ENCODE measurements at regions of chr3 and their contacts with region 1.

Region 1: DNA sequence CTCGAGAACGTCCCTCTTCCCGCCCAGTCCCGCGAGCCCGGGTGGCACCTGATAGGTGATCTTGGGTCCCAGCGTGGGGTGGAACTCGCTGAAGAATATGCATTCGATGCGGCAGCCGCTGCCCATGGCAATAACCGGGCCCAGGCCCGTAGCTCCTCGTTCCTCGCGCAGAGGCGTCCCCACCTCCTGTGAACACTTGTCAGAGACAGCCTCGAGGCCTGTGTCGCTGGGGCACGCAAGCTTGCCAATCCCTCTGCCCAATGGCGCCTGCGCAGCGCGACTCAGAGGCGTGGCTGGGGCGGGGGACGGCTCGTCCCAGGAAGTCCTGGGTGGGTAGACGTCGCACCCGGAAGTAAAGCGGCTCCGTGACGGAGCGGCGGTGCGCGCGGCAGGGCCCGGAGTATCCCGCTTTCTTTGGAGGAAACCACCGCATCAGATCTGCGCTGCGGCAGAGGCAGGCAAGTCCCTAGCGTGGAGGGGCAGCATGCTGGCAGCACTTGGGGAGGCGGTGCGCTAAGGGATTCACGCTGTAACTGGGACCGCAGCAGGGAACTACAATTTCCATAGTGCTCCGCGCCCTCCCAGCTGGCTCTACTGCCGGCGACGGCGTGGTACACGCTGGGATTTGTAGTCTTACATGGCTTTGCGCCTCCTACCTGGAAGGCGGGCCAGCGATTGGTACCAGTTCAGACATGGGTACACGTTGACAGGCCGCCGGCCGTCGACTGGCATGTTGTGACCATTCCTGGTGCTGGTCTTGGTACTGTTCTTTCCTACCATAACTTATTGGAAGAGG is at the starts of genes CYB561D2 and NPRL2:
- DNase-seq: peak; percentile 98 to 100 (median 99)
- ATAC-seq: peak; percentile 88
- H3K4me3 ChIP-seq: peak within 1 kb of the TSS; percentile 79
- H3K4me3 Mint-ChIP-seq: peak within 1 kb of the TSS; percentile 98
- H3K27ac ChIP-seq: peak within 1 kb of the TSS; percentile 83 to 94
- H3K27ac Mint-ChIP-seq: peak within 1 kb of the TSS; percentile 99
- H3K4me1 ChIP-seq: peaks cover 54% of the 10 kb centered on the region
- H3K4me1 Mint-ChIP-seq: peaks cover 65% of the 10 kb centered on the region
- H3K27me3 ChIP-seq: no peaks in the 10 kb centered on the region
- H3K27me3 Mint-ChIP-seq: no peaks in the 10 kb centered on the region
- CTCF ChIP-seq: no peak
- total RNA-seq, gene CYB561D2: 24.2 to 24.3 TPM
- total RNA-seq, gene NPRL2: 28.7 to 30.9 TPM

Region 2: DNA sequence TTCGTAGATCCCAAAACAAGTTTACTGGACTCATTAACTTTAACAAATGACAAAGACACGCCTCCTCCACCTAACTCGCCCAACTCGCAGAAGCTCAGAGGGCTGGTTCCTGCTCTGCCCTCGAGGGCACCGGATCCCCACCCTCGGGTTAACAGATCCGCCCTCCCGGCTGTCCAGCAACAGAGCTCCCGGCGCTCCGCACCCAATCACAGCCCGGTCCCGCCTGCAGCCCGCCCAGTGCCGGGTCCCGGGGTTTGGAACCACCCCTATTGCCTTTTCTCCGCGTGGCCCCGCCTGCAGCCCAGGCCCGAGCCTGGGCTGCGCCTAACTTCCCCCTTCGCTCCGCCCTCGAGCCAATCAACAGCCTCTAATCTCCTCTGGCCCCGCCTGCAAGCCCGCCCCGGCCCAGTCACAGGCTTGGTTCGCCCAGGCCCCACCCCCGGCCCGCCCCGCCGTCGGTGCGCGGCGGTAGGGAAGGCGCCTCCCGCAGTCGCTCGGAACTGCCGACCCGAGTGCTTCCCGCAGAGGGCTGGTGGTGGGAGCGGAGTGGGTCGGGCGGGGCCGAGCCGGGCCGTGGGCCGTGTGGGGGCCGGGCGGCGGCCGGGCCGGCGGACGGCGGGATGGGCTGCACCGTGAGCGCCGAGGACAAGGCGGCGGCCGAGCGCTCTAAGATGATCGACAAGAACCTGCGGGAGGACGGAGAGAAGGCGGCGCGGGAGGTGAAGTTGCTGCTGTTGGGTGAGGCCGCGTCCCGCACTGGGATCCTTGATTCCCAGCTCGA is 114.8 kb before region 1 on chr3 and contains the start of gene GNAI2:
- CTCF ChIA-PET with region 1: no interaction called
- POLR2A ChIA-PET with region 1: interaction called, 4 read pairs
- intact Hi-C with region 1: loop called in 1 of 2 experiments (anchors 5 kb)
- DNase-seq: peak; percentile 98 to 99 (median 98)
- ATAC-seq: peak; percentile 85
- H3K4me3 ChIP-seq: peak within 1 kb of the TSS; percentile 94 to 100
- H3K4me3 Mint-ChIP-seq: peak within 1 kb of the TSS; percentile 96
- H3K27ac ChIP-seq: peak within 1 kb of the TSS; percentile 72 to 83
- H3K27ac Mint-ChIP-seq: peak within 1 kb of the TSS; percentile 96
- H3K4me1 ChIP-seq: peaks cover 38% of the 10 kb centered on the region
- H3K4me1 Mint-ChIP-seq: peaks cover 33% of the 10 kb centered on the region
- H3K27me3 ChIP-seq: no peaks in the 10 kb centered on the region
- H3K27me3 Mint-ChIP-seq: no peaks in the 10 kb centered on the region
- CTCF ChIP-seq: no peak
- total RNA-seq, gene GNAI2: 185 to 192 TPM

Region 3: GRCh38 chr3:50298836-50299637 is 51.7 kb before region 1 on chr3 and contains the starts of genes HYAL3 and NAA80:
- CTCF ChIA-PET with region 1: interaction called, 6 read pairs
- POLR2A ChIA-PET with region 1: interaction called, 18 read pairs
- intact Hi-C with region 1: loop called in 1 of 2 experiments (anchors 1 kb)
- DNase-seq: peak; percentile 85 to 100 (median 99)
- ATAC-seq: peak; percentile 89
- H3K4me3 ChIP-seq: peak within 1 kb of the TSS; percentile 97
- H3K4me3 Mint-ChIP-seq: peak within 1 kb of the TSS; percentile 99
- H3K27ac ChIP-seq: peak within 1 kb of the TSS; percentile 93 to 94
- H3K27ac Mint-ChIP-seq: peak within 1 kb of the TSS; percentile 99
- H3K4me1 ChIP-seq: peaks cover 25% of the 10 kb centered on the region
- H3K4me1 Mint-ChIP-seq: peaks cover 28% of the 10 kb centered on the region
- H3K27me3 ChIP-seq: no peaks in the 10 kb centered on the region
- H3K27me3 Mint-ChIP-seq: no peaks in the 10 kb centered on the region
- CTCF ChIP-seq: peak; percentile 53
- total RNA-seq, gene HYAL3: 2.1 to 3.2 TPM
- total RNA-seq, gene NAA80: 37.1 to 40.7 TPM

Region 4: DNA sequence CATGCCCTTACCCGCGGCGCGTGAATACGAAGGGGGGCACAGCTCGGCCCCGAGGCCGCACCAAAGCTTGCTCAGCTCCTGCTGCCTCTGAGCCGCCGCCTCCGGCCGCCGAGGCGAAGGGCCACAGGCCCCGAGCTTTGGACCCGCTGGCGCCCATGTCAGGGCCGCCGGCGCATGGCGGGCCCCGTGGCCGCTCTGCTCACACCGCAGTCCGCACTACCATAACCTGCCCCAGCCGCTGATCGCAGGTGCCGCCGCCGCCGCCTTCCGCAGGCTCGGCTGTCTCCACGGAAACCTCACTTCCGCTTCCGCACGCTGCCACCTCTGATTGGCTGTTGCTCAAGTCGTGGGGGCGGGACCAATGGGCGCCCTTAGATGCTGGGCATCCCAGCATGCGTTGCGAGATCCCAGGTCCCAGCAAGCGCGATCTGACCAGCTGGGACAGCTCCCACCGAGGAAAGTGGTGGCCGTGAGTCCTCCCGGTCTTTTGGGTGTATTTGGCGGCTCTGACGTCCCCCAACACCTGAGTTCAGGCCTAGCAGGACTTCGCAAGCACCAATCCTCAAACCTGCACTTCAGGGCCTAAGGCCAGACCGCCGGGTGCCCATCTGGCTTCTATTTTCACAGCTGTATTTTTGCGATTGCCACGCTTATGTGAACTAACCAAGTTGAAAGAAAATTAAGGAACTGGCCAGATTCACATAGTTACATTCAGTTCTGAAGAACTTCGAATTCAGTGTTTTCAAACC is 22.6 kb before region 1 on chr3 and contains the start of gene TUSC2:
- CTCF ChIA-PET with region 1: interaction called, 31 read pairs
- POLR2A ChIA-PET with region 1: interaction called, 129 read pairs
- intact Hi-C with region 1: loop called in 1 of 2 experiments (anchors 2 kb)
- DNase-seq: peak; percentile 85 to 98 (median 94)
- ATAC-seq: peak; percentile 96
- H3K4me3 ChIP-seq: peak within 1 kb of the TSS; percentile 78 to 89
- H3K4me3 Mint-ChIP-seq: peak within 1 kb of the TSS; percentile 94
- H3K27ac ChIP-seq: peak within 1 kb of the TSS; percentile 80 to 82
- H3K27ac Mint-ChIP-seq: peak within 1 kb of the TSS; percentile 93
- H3K4me1 ChIP-seq: peaks cover 26% of the 10 kb centered on the region
- H3K4me1 Mint-ChIP-seq: peaks cover 27% of the 10 kb centered on the region
- H3K27me3 ChIP-seq: no peaks in the 10 kb centered on the region
- H3K27me3 Mint-ChIP-seq: no peaks in the 10 kb centered on the region
- CTCF ChIP-seq: no peak
- total RNA-seq, gene TUSC2: 23.6 to 23.7 TPM

Region 5: DNA sequence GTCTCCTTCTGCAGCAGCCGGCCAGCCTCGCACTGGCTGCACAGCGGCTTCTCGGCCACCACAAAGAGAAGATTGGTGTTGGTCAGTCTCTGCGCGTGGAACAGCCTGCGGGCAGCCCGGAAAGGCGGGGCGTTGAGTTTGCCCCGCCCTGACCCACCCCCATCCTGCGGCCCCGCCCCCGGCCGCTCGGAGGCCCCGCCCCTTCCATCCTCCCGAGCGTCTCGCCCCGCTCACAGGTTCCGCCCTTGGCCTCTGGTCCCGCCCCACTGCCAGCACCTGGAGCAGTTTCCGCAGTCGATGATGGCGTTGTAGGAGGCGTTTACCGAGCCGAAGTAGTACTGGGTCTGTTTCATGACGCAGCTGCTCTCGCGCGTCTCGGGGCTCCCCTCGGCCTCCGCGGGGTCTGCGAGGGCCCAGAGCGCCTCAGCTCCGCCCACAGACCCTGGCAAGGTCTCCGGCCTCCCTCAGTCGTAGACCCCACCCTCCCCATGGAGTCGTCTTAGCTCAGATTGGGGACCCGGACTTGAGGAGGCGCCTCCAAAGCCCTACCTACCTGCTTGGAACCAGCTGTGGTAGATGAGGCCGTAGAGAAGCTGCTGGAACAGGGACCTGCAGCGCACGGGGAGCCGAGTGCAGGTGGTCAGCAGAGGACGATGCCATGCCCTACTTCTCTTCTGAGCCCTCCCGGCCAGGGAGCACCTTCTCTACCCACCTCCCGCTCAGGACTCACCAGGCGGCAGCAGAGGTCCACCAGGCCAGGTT is 14.5 kb after region 1 on chr3:
- CTCF ChIA-PET with region 1: interaction called, 7 read pairs
- POLR2A ChIA-PET with region 1: interaction called, 16 read pairs
- intact Hi-C with region 1: loop called (anchors 1 kb)
- DNase-seq: peak; percentile 89 to 98 (median 94)
- ATAC-seq: peak; percentile 95
- H3K4me3 ChIP-seq: peak overlapping the region; percentile 68 to 81
- H3K4me3 Mint-ChIP-seq: peak overlapping the region; percentile 87
- H3K27ac ChIP-seq: peak overlapping the region; percentile 91 to 92
- H3K27ac Mint-ChIP-seq: peak overlapping the region; percentile 95
- H3K4me1 ChIP-seq: peaks cover 20% of the 10 kb centered on the region
- H3K4me1 Mint-ChIP-seq: peaks cover 35% of the 10 kb centered on the region
- H3K27me3 ChIP-seq: no peaks in the 10 kb centered on the region
- H3K27me3 Mint-ChIP-seq: no peaks in the 10 kb centered on the region
- CTCF ChIP-seq: no peak

Region 6: GRCh38 chr3:50396488-50396887 is 45.8 kb after region 1 on chr3:
- CTCF ChIA-PET with region 1: no interaction called
- POLR2A ChIA-PET with region 1: no interaction called
- intact Hi-C with region 1: no loop called
- DNase-seq: no peak
- ATAC-seq: no peak
- H3K4me3 ChIP-seq: no peak overlapping the region
- H3K4me3 Mint-ChIP-seq: no peak overlapping the region
- H3K27ac ChIP-seq: no peak overlapping the region
- H3K27ac Mint-ChIP-seq: no peak overlapping the region
- H3K4me1 ChIP-seq: no peaks in the 10 kb centered on the region
- H3K4me1 Mint-ChIP-seq: no peaks in the 10 kb centered on the region
- H3K27me3 ChIP-seq: no peaks in the 10 kb centered on the region
- H3K27me3 Mint-ChIP-seq: no peaks in the 10 kb centered on the region
- CTCF ChIP-seq: no peak

Region 7: GRCh38 chr3:50450209-50450921 is 99.6 kb after region 1 on chr3:
- CTCF ChIA-PET with region 1: no interaction called
- POLR2A ChIA-PET with region 1: no interaction called
- intact Hi-C with region 1: no loop called
- DNase-seq: peak; percentile 48 to 82 (median 75)
- ATAC-seq: peak; percentile 80
- H3K4me3 ChIP-seq: peak overlapping the region; percentile 43 to 54
- H3K4me3 Mint-ChIP-seq: peak overlapping the region; percentile 86
- H3K27ac ChIP-seq: peak overlapping the region; percentile 83 to 88
- H3K27ac Mint-ChIP-seq: peak overlapping the region; percentile 93
- H3K4me1 ChIP-seq: peaks cover 28% of the 10 kb centered on the region
- H3K4me1 Mint-ChIP-seq: peaks cover 32% of the 10 kb centered on the region
- H3K27me3 ChIP-seq: no peaks in the 10 kb centered on the region
- H3K27me3 Mint-ChIP-seq: no peaks in the 10 kb centered on the region
- CTCF ChIP-seq: no peak

Region 8: DNA sequence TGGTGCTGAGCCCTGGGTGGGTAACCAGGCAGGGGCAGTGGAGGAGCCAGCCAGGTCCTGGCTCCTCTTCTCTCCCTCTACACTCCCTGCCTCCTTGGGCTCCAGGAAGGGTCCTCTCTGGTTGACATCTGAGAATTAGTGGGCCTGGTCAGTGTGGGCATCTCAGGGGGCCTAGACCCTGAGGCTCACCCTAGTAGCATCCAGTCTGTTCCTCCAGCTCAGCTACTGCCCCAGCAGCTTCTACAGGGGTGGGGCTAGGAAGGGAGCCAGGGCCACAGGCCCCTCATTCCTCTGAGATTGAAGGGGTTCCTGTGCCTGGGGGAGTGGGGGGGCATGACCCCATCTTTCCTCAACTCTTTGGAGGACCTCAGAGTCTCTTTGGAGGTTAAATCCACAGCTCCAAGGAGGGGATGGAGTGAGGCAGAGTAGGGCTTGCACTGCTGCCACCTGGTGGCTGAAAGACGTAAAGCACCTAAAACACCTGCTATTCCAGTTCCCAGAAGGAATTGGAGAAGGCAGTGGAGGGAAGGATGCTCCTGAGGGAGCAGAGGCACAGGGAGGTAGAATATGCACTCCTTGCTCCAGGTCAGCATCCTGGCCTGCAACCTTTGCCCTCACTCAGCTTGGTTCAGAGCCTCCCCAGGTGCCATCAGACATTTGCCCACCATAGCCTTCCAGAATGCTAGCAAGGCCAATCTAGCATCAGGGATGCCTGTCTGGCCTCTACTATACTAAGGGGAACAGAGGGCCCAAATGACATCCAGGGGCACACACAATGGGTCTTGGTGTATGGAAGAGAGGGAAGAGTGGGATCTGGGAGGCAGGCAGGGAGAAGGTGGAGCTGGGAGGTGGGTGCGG is 191.7 kb after region 1 on chr3:
- CTCF ChIA-PET with region 1: interaction called, 67 read pairs
- POLR2A ChIA-PET with region 1: interaction called, 5 read pairs
- intact Hi-C with region 1: loop called in 1 of 2 experiments (anchors 1 kb)
- DNase-seq: peak; percentile 38 to 76 (median 63)
- ATAC-seq: peak; percentile 84
- H3K4me3 ChIP-seq: no peak overlapping the region
- H3K4me3 Mint-ChIP-seq: no peak overlapping the region
- H3K27ac ChIP-seq: no peak overlapping the region
- H3K27ac Mint-ChIP-seq: no peak overlapping the region
- H3K4me1 ChIP-seq: peaks cover 3% of the 10 kb centered on the region
- H3K4me1 Mint-ChIP-seq: no peaks in the 10 kb centered on the region
- H3K27me3 ChIP-seq: no peaks in the 10 kb centered on the region
- H3K27me3 Mint-ChIP-seq: peaks cover 10% of the 10 kb centered on the region
- CTCF ChIP-seq: peak; percentile 78

Region 9: DNA sequence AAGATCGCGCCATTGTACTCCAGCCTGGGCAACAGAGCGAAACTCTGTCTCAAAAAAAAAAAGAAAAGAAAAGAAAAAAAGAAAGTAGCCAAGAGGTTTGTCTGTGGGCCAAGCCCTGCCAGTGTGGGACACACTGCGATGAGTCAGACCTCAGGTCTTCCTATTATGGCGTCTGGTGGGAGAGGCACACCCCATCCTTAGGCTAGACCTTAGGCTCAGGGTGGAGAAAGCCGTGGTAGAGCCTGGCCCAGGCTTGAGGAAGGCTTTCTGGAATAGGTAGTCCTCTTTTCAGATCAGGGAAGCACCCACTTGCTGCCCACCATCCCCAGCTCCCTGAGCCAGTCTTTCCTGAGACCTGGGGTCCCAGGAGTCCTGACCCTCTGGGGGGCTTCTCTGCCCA is 224.6 kb after region 1 on chr3:
- CTCF ChIA-PET with region 1: no interaction called
- POLR2A ChIA-PET with region 1: no interaction called
- intact Hi-C with region 1: no loop called
- DNase-seq: no peak
- ATAC-seq: no peak
- H3K4me3 ChIP-seq: no peak overlapping the region
- H3K4me3 Mint-ChIP-seq: no peak overlapping the region
- H3K27ac ChIP-seq: peak overlapping the region; percentile 42 to 75
- H3K27ac Mint-ChIP-seq: peak overlapping the region; percentile 94
- H3K4me1 ChIP-seq: peaks cover 80% of the 10 kb centered on the region
- H3K4me1 Mint-ChIP-seq: peaks cover 62% of the 10 kb centered on the region
- H3K27me3 ChIP-seq: no peaks in the 10 kb centered on the region
- H3K27me3 Mint-ChIP-seq: no peaks in the 10 kb centered on the region
- CTCF ChIP-seq: no peak

Region 10: GRCh38 chr3:50587806-50588758 is 237.4 kb after region 1 on chr3:
- CTCF ChIA-PET with region 1: no interaction called
- POLR2A ChIA-PET with region 1: no interaction called
- intact Hi-C with region 1: no loop called
- DNase-seq: peak in 7 of 9 experiments; percentile 27 to 84 (median 58)
- ATAC-seq: peak; percentile 67
- H3K4me3 ChIP-seq: no peak overlapping the region
- H3K4me3 Mint-ChIP-seq: peak overlapping the region; percentile 33
- H3K27ac ChIP-seq: peak overlapping the region in 1 of 2 experiments; percentile 79
- H3K27ac Mint-ChIP-seq: peak overlapping the region; percentile 88
- H3K4me1 ChIP-seq: peaks cover 55% of the 10 kb centered on the region
- H3K4me1 Mint-ChIP-seq: peaks cover 54% of the 10 kb centered on the region
- H3K27me3 ChIP-seq: no peaks in the 10 kb centered on the region
- H3K27me3 Mint-ChIP-seq: no peaks in the 10 kb centered on the region
- CTCF ChIP-seq: no peak